Esophagus muscularis mucosa (tissue), 4 donors: ENCODE measurements at regions of chr1 and their contacts with region 1.

Region 1: DNA sequence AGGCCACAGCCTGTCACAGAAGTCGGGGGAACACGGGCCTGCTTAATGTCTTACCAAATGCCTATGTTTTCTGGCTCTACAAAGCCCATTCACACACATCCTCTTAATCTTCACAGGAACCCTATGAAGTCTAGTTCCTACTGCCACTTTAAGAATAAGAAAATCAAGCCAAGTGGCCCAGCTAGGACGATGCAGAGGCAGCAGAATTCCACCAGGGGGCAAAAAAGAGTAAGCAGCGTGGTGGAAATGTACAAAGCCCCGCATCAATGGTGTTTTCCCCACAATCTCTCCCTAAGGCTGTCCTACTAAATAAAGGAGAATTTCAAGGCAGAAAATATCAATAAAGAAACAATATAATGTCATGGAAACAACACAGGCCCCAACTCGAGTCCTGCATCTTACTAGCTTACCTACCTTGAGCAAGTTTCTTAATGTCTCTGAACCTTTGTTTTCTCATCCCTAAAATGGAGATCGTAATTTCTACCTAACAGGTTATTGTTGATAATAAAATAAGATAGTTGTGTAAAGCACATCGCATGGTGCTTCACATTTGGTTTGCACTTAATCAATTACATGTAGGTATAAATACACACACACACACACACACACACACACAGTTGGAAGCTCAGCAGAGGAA is 21.4 kb downstream of the SEC16B start:
- DNase-seq: no peak
- H3K4me3 ChIP-seq: no peak overlapping the region
- H3K27ac ChIP-seq: no peak overlapping the region
- H3K4me1 ChIP-seq: peaks cover 0 to 10% (median 0%) of the 10 kb centered on the region in 4 donors
- H3K27me3 ChIP-seq: no peaks in the 10 kb centered on the region
- CTCF ChIP-seq: peak; percentile 88 to 92 (median 91)
- EP300 ChIP-seq: no peak
- POLR2A ChIP-seq: no peak

Region 2: GRCh38 chr1:176897350-176898236 is 1050.9 kb before region 1 on chr1:
- intact Hi-C with region 1: loop called (anchors 5 kb)
- DNase-seq: no peak
- H3K4me3 ChIP-seq: peak overlapping the region; percentile 22 to 46 (median 29)
- H3K27ac ChIP-seq: no peak overlapping the region
- H3K4me1 ChIP-seq: peaks cover 4 to 10% (median 9%) of the 10 kb centered on the region in 4 donors
- H3K27me3 ChIP-seq: peaks cover 0 to 44% (median 0%) of the 10 kb centered on the region in 4 donors
- CTCF ChIP-seq: peak; percentile 54 to 66 (median 59)
- EP300 ChIP-seq: no peak
- POLR2A ChIP-seq: no peak

Region 3: GRCh38 chr1:177181631-177182291 is 766.7 kb before region 1 on chr1:
- intact Hi-C with region 1: loop called (anchors 10 kb)
- DNase-seq: no peak
- H3K4me3 ChIP-seq: peak overlapping the region; percentile 5 to 49 (median 26)
- H3K27ac ChIP-seq: no peak overlapping the region
- H3K4me1 ChIP-seq: peaks cover 0 to 21% (median 13%) of the 10 kb centered on the region in 4 donors
- H3K27me3 ChIP-seq: peaks cover 0 to 38% (median 0%) of the 10 kb centered on the region in 4 donors
- CTCF ChIP-seq: peak; percentile 67 to 89 (median 76)
- EP300 ChIP-seq: no peak
- POLR2A ChIP-seq: no peak

Region 4: GRCh38 chr1:177256153-177257075 is 692.0 kb before region 1 on chr1:
- intact Hi-C with region 1: loop called (anchors 10 kb)
- DNase-seq: no peak
- H3K4me3 ChIP-seq: peak overlapping the region in 2 of 4 donors; percentile 2 to 7
- H3K27ac ChIP-seq: peak overlapping the region in 1 of 4 donors; percentile 26
- H3K4me1 ChIP-seq: peaks cover 9 to 18% (median 14%) of the 10 kb centered on the region in 4 donors
- H3K27me3 ChIP-seq: no peaks in the 10 kb centered on the region
- CTCF ChIP-seq: peak; percentile 52 to 65 (median 52)
- EP300 ChIP-seq: no peak
- POLR2A ChIP-seq: no peak

Region 5: DNA sequence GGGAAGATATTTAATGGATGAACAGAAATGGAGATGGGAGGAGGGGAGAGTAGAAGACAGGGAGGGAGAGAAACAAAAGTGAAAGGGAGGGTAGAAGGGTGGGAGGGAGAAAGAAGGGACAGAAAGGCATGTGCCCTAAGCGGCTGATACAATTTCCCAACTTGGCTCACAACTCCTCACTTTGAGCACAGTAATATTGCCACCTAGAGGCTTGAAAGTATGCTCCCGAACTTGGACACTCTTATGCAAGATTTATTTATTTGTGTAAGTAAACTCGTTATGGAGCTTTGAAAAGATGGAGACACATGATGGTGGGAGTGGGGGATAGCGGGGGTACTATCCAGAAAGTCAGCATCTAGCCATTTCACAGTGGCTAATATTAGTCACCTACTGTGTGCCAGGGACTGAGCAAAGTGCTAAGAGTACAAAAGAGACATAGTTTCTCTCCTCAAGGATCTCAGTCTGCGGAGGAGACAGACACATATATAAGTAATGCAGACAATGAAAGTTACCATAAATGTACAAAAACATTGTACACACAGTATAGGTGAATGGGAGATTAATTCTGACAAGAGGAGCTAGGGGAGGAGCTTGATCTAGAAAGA is 168.3 kb before region 1 on chr1:
- intact Hi-C with region 1: loop called (anchors 10 kb)
- DNase-seq: no peak
- H3K4me3 ChIP-seq: no peak overlapping the region
- H3K27ac ChIP-seq: no peak overlapping the region
- H3K4me1 ChIP-seq: peaks cover 0 to 5% (median 1%) of the 10 kb centered on the region in 4 donors
- H3K27me3 ChIP-seq: no peaks in the 10 kb centered on the region
- CTCF ChIP-seq: peak; percentile 48 to 60 (median 57)
- EP300 ChIP-seq: no peak
- POLR2A ChIP-seq: no peak